Activated CD4-positive, alpha-beta memory T cell treated with anti-CD3 and anti-CD28 coated beads for 36 hours (primary cell): ENCODE measurements at regions of chr5 and their contacts with region 1.

Region 1: DNA sequence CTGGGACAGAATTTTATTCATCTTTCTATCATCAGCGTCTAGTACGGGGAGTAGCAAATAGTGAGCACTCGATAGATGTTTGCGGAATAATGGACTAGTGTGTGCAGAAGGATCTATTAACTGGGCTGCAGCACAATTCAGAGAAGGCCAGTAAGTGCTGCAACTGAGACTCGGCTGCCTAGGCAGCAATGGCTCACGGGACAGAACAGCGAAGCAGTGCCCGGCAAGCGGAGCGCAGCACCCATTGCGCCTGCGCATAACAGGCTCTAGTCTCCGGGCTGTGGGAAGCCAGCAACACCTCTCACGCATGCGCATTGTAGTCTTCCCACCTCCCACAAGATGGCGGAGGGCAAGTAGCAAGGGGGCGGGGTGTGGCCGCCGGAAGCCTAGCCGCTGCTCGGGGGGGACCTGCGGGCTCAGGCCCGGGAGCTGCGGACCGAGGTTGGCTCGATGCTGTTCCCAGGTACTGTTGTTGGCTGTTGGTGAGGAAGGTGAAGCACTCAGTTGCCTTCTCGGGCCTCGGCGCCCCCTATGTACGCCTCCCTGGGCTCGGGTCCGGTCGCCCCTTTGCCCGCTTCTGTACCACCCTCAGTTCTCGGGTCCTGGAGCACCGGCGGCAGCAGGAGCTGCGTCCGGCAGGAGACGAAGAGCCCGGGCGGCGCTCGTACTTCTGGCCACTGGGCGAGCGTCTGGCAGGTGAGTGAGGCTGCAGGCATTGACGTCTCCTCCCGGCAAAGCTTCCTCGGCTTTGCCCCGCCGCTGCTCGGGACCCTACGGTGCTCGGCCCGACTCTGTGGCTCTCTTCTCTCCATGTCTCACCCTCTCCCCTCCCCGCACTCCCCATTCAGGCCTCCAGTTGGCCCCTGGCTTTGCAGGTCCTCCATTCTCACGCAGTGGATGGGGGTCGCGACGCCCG is 30.2 kb upstream of the APC start:
- DNase-seq: peak; percentile 98
- H3K4me3 Mint-ChIP-seq: peak overlapping the region; percentile 87
- H3K27ac Mint-ChIP-seq: peak overlapping the region; percentile 87
- H3K4me1 Mint-ChIP-seq: peaks cover 49% of the 10 kb centered on the region
- H3K27me3 Mint-ChIP-seq: no peaks in the 10 kb centered on the region

Region 2: DNA sequence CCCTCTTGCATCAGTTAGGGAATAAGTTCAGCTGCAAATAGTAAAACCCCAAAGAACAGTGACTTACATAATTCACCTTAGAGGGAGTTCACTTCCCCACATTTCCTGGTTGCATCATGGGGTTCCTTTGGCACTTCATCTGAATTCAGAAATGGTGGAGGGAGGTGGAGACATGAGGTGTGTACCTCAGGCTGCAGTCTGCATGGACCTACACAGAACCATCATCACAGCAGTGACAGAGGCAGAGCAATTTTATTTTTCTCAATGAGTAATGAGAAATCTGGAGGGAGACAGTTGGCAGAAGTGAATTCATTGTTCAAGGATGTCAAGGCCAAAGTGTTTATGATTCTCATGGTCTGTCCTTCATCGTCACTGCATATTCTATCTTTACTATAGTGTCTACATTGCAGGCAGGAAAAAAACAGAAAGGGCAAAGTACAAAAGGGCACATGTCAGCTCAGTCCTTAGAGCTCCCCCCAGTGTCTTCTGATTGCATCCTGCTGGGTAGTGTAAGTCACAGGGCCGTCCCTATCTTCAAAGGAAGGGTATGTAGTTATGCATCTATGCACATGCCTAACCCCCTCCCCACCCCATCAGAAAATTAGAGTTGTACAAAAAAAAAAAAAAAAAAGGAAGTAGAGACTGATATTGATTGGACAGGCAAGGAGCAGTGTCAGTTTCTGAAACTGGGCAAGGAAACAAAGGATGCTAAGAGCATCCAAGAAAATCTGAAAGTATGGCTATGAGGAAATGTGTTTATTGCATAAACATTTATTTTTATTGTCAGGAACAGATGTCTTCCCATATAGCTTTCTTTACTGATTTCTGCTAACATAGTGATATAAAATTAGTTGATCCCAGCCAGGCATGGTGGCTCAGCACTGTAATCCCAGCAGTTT is 102.5 kb before region 1 on chr5:
- CTCF ChIA-PET with region 1: no interaction called
- POLR2A ChIA-PET with region 1: no interaction called
- intact Hi-C with region 1: no loop called
- DNase-seq: no peak
- H3K4me3 Mint-ChIP-seq: no peak overlapping the region
- H3K27ac Mint-ChIP-seq: no peak overlapping the region
- H3K4me1 Mint-ChIP-seq: no peaks in the 10 kb centered on the region
- H3K27me3 Mint-ChIP-seq: peaks cover 10% of the 10 kb centered on the region

Region 3: DNA sequence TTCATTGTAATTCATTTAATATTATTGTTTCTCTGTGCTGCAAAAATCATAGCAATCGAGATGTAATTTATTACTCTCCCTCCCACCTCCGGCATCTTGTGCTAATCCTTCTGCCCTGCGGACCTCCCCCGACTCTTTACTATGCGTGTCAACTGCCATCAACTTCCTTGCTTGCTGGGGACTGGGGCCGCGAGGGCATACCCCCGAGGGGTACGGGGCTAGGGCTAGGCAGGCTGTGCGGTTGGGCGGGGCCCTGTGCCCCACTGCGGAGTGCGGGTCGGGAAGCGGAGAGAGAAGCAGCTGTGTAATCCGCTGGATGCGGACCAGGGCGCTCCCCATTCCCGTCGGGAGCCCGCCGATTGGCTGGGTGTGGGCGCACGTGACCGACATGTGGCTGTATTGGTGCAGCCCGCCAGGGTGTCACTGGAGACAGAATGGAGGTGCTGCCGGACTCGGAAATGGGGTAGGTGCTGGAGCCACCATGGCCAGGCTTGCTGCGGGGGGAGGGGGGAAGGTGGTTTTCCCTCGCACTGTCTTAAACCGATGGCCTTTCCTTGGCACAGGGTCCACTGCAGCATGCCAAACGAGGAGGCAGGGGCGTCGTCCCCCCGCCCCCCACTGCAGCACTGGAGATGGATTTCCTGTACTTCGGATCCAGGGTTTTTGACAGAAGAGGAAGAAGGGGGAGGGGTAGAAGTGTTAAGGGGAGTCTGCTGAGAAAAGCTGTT is 30.2 kb after region 1 on chr5 and contains the start of gene APC:
- CTCF ChIA-PET with region 1: interaction called, 3 read pairs
- POLR2A ChIA-PET with region 1: interaction called, 3 read pairs
- intact Hi-C with region 1: loop called (anchors 1 kb)
- DNase-seq: peak; percentile 93
- H3K4me3 Mint-ChIP-seq: peak within 1 kb of the TSS; percentile 93
- H3K27ac Mint-ChIP-seq: peak within 1 kb of the TSS; percentile 53
- H3K4me1 Mint-ChIP-seq: peaks cover 13% of the 10 kb centered on the region
- H3K27me3 Mint-ChIP-seq: no peaks in the 10 kb centered on the region
- total RNA-seq, gene APC: 17.3 to 20.1 TPM

Region 4: DNA sequence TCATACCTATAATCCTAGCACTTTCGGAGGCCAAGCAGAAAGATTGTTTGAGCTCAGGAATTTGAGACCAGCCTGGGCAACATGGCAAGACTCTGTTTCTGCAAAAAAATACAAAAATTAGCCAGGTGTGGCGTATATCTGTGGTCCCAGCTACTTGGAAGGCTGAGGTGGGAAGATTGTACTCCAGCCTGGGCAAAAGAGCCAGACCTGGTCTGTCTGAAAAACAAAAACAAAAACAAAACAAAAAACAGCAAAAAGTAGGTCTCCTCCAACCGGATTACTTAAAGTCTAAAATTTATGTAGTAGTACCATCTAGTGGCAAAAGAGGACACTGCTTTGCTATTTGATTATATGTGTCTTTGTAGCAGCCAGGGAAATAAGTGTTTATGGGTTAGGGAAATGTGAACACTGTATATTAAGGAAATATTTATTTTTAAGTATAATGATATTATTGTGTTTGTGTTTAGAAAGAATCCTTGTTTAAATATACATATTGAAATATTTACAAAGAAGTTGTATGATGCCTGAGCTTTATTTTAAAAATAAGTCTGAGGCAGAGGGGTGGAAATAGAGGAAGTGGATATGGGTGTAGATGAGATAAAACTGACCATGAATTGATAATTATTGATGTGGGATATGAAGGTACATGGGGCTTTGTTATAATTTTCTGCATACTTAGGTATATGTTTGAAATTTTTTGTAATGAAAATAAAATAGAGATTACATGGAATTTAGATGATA is 50.2 kb after region 1 on chr5:
- CTCF ChIA-PET with region 1: interaction called, 4 read pairs
- POLR2A ChIA-PET with region 1: no interaction called
- intact Hi-C with region 1: loop called (anchors 5 kb)
- DNase-seq: no peak
- H3K4me3 Mint-ChIP-seq: no peak overlapping the region
- H3K27ac Mint-ChIP-seq: no peak overlapping the region
- H3K4me1 Mint-ChIP-seq: no peaks in the 10 kb centered on the region
- H3K27me3 Mint-ChIP-seq: no peaks in the 10 kb centered on the region

Region 5: GRCh38 chr5:112860929-112861637 is 153.6 kb after region 1 on chr5 and contains the start of gene SRP19:
- CTCF ChIA-PET with region 1: no interaction called
- POLR2A ChIA-PET with region 1: no interaction called
- intact Hi-C with region 1: loop called (anchors 1 kb)
- DNase-seq: peak; percentile 95
- H3K4me3 Mint-ChIP-seq: peak within 1 kb of the TSS; percentile 86
- H3K27ac Mint-ChIP-seq: peak within 1 kb of the TSS; percentile 95
- H3K4me1 Mint-ChIP-seq: peaks cover 33% of the 10 kb centered on the region
- H3K27me3 Mint-ChIP-seq: peaks cover 3% of the 10 kb centered on the region
- total RNA-seq, gene SRP19: 49.1 to 51.6 TPM

Region 6: DNA sequence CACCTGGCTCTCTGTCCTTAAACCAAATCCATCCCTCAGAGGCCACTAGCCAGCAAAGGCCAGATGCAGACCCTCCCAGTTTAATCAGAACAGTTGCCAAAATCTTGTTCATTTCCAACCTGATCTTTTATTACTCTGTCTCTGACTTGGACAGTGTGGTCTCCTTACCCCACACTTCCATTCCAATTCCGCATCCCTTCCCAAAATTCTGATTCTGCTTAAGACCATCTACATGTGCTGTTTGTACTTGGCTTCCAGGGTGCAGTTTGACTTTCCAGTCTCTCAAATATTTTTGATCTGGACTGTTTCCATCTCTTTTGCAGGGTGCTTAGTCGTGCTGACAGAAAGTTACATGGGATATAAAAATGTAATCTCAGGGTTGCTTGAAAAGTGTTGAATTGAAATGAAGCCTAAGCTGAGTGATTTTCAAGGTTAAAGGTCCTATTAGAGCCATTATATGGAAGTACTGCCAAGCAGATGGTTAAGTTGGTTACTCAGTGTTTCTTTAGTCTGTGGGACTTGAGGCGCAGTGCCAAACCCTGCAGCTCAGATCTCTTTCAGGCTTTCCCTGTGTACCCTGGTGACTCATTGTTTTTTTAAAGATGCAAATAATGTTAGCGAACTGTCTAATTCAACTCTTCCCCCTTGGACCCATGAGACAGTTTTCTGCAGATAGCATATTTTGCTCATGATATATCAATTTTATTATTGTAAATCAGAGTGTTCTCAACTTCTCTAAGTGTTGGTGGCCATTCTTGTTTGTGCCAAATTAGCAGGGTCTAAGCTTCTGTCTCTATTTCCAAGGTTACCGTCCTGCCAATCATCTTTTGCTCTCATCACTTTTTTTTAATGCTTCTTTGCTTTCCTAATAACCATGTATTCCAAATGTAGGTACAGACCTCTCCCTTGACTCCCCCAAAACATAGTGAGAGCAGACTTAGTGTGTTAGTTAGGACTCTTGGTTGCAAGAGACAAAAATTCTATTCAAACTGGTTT is 250.9 kb after region 1 on chr5:
- CTCF ChIA-PET with region 1: no interaction called
- POLR2A ChIA-PET with region 1: no interaction called
- intact Hi-C with region 1: loop called (anchors 5 kb)
- DNase-seq: peak; percentile 61
- H3K4me3 Mint-ChIP-seq: no peak overlapping the region
- H3K27ac Mint-ChIP-seq: no peak overlapping the region
- H3K4me1 Mint-ChIP-seq: peaks cover 29% of the 10 kb centered on the region
- H3K27me3 Mint-ChIP-seq: peaks cover 5% of the 10 kb centered on the region

Region 7: GRCh38 chr5:112976432-112977309 is 269.2 kb after region 1 on chr5 and contains the start of gene DCP2:
- CTCF ChIA-PET with region 1: no interaction called
- POLR2A ChIA-PET with region 1: no interaction called
- intact Hi-C with region 1: loop called (anchors 2 kb)
- DNase-seq: peak; percentile 97
- H3K4me3 Mint-ChIP-seq: peak within 1 kb of the TSS; percentile 85
- H3K27ac Mint-ChIP-seq: peak within 1 kb of the TSS; percentile 98
- H3K4me1 Mint-ChIP-seq: peaks cover 39% of the 10 kb centered on the region
- H3K27me3 Mint-ChIP-seq: no peaks in the 10 kb centered on the region
- total RNA-seq, gene DCP2: 102 TPM

Region 8: DNA sequence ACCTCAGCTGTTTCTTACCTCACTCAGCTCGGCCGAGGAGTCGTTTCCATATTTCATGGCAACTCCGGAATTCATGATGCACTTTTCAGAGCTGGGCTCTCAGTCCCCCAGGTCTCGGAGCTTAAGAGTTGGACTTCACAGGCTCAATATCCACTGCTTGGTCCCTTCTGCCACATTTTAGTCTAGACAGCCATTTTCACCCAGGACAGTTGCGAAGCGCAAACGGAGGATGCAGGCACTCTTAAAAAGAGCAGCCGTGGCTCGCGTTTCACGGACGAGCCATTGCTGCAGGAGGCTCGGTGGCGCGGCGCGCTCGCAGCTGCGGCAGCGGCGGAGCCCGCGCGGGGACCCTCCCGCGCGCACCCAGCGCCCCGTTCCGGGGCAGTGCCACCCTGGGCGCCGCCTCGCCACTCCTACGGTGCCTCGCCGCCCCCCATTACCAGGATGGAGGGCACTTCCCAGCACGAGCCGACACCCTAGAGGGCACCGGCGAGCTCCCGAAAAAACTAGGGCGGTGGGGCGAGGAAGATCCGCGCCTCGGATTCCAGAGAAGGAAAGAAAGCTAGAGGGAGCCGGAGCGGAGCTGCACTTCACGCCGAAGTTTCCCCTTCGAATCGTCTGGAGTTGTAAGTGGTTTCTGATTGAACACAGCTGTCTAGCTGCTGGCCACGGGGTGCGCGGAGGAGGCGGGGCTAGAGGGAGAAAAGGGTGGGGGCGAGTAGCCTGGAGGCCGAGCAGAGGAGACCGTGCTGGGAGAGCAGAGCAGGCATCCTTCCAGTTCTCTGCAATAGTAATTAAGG is 587.1 kb after region 1 on chr5:
- CTCF ChIA-PET with region 1: no interaction called
- POLR2A ChIA-PET with region 1: no interaction called
- intact Hi-C with region 1: loop called (anchors 10 kb)
- DNase-seq: peak; percentile 88
- H3K4me3 Mint-ChIP-seq: peak overlapping the region; percentile 89
- H3K27ac Mint-ChIP-seq: peak overlapping the region; percentile 55
- H3K4me1 Mint-ChIP-seq: peaks cover 16% of the 10 kb centered on the region
- H3K27me3 Mint-ChIP-seq: peaks cover 13% of the 10 kb centered on the region